Ascending aorta (tissue), 2 donors: ENCODE measurements at regions of chr2 and their contacts with region 1.

Region 1: GRCh38 chr2:10043906-10044601 is 704 bp downstream of the KLF11 start:
- DNase-seq: peak; percentile 91 to 99
- H3K4me3 ChIP-seq: peak overlapping the region; percentile 65 to 81
- H3K27ac ChIP-seq: peak overlapping the region; percentile 97
- H3K4me1 ChIP-seq: peaks cover 6 to 41% of the 10 kb centered on the region in 2 donors
- H3K27me3 ChIP-seq: no peaks in the 10 kb centered on the region
- CTCF ChIP-seq: no peak

Region 2: GRCh38 chr2:9630749-9631483 is 413.1 kb before region 1 on chr2 and contains the start of gene YWHAQ:
- intact Hi-C with region 1: loop called (anchors 10 kb)
- DNase-seq: peak; percentile 97 to 100
- H3K4me3 ChIP-seq: peak within 1 kb of the TSS; percentile 79 to 95
- H3K27ac ChIP-seq: peak within 1 kb of the TSS; percentile 96 to 97
- H3K4me1 ChIP-seq: peaks cover 5 to 33% of the 10 kb centered on the region in 2 donors
- H3K27me3 ChIP-seq: no peaks in the 10 kb centered on the region
- CTCF ChIP-seq: no peak
- total RNA-seq, gene YWHAQ: 172 TPM

Region 3: DNA sequence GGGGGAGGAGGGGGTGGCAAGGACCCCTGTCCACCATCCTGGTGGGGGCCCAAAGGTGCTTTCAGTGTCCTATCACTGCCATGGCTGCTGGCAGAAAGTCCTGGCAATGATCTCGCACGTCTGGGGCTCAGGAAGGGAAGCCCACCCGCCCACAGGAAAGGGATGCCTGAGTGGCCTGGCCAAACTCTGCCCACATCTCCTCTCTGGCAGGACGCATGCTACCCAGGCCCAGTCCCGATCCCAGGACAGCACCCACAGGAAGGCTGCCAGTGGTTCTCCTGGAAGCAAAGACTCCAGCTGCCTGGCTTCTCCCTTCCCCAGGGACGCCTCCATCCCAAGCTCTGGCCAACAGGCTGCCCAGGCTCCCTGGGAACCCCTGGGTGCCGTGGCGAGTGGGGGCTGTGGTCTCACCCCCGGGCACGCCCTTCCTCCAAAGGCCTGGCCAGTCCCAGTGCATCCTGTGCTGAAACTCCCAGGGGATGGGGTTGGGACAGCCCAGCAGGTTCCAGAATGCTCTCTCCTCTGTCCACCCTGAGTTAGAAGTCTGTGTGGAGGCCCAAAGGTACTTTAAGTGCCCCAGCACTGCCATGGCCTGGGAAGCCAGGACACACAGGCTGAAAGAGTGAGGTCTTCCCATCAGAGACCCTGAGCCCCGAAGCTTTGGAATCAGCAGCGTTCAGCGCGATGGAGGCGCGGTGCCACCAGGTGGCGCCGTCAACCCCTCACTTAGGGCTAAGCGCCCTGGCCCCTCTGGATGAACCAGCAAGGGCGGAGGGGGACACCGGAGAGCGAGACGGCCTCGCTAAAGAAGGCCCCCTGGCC is 230.5 kb before region 1 on chr2:
- intact Hi-C with region 1: loop called (anchors 2 kb)
- DNase-seq: peak in 1 of 2 donors; percentile 81
- H3K4me3 ChIP-seq: peak overlapping the region; percentile 10 to 40
- H3K27ac ChIP-seq: no peak overlapping the region
- H3K4me1 ChIP-seq: peaks cover 0 to 7% of the 10 kb centered on the region in 2 donors
- H3K27me3 ChIP-seq: no peaks in the 10 kb centered on the region
- CTCF ChIP-seq: peak; percentile 76 to 96 (median 88)

Region 4: GRCh38 chr2:9951272-9951972 is 92.6 kb before region 1 on chr2 and contains the start of gene GRHL1:
- intact Hi-C with region 1: loop called (anchors 1 kb)
- DNase-seq: peak; percentile 45 to 94
- H3K4me3 ChIP-seq: peak within 1 kb of the TSS; percentile 85 to 96
- H3K27ac ChIP-seq: no peak within 1 kb of the TSS
- H3K4me1 ChIP-seq: peaks cover 4 to 10% of the 10 kb centered on the region in 2 donors
- H3K27me3 ChIP-seq: no peaks in the 10 kb centered on the region
- CTCF ChIP-seq: no peak
- total RNA-seq, gene GRHL1: 0.43 TPM

Region 5: GRCh38 chr2:10079870-10080535 is 35.9 kb after region 1 on chr2 and contains the start of gene CYS1:
- intact Hi-C with region 1: loop called (anchors 5 kb)
- DNase-seq: no peak
- H3K4me3 ChIP-seq: peak within 1 kb of the TSS; percentile 84 to 95
- H3K27ac ChIP-seq: peak within 1 kb of the TSS; percentile 85 to 98
- H3K4me1 ChIP-seq: peaks cover 0 to 10% of the 10 kb centered on the region in 2 donors
- H3K27me3 ChIP-seq: no peaks in the 10 kb centered on the region
- CTCF ChIP-seq: peak in 1 of 3 experiments; percentile 57
- total RNA-seq, gene CYS1: 13.8 TPM

Region 6: GRCh38 chr2:10162586-10163497 is 118.8 kb after region 1 on chr2:
- intact Hi-C with region 1: no loop called
- DNase-seq: no peak
- H3K4me3 ChIP-seq: no peak overlapping the region
- H3K27ac ChIP-seq: no peak overlapping the region
- H3K4me1 ChIP-seq: no peaks in the 10 kb centered on the region
- H3K27me3 ChIP-seq: no peaks in the 10 kb centered on the region
- CTCF ChIP-seq: no peak